Left ventricle myocardium superior (tissue), 1 donor: ENCODE measurements at regions of chr15 and their contacts with region 1.

Region 1: DNA sequence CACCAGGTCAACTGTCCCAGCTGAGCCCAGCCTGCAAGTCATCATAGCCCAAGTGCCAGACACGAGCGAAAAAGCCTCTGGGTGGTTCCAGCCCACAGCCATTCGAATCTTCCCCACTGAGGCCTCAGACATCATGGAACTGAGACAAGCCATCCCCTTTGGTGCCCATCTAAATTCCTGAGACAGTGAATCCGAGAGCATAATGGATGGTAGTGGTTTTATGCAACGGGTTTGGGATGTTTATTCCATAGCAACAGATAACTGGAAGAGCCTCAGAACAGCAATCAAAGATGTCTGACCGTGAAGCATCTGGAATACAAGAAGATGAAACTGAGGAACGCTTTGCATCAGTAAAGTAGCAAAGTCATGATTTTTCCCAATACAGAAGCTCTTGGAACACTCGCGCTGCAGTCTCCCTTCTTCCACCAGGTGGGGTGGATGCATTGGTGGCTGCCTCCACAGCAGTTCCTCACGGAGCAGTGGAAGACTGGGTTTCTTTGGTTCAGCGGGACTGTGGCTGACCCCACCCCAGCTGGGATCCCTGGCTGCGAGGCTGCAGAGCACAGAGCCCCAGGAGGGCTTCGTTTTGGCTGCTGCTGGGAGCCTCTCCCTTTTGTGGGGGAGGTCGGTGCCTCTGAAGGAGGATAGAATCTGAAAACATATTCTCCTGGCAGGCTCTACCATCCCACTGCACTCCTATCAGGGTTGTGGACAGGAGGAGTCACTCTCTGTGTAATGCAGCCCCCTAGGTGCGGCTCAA is 26.4 kb upstream of the PDE8A start:
- DNase-seq: peak; percentile 77
- ATAC-seq: peak; percentile 96

Region 2: DNA sequence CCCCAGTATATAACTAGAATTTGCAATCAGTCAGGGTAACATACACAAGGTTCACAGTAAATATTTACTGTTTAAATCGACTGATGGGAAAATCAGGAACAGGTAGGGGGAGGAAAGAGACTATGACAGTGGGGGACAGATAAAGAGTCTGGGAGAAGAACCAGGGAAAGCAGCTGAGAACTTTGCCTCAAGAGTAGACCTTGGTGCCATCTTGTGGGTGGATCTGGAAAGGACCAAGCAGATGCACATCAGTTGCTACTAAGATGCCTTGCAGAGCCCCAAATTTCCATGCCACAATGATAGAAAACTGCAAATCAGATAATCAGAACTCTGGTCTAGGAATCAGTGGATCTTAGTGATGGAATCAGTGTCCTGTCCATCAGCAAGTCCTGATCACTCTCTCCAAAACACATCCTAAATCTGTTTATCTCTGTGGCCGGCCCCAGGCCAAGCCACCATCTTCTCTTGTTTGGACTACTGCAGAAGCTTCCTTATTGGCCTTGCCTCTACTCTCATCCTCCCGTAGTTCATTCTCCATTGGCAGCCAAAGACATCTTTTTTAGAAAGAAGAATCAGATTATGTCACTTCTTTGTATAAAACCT is 89.1 kb after region 1 on chr15:
- intact Hi-C with region 1: loop called (anchors 2 kb)
- DNase-seq: no peak
- ATAC-seq: peak; percentile 85